Calu3 (cell line): ENCODE measurements at regions of chr12 and their contacts with region 1.

Region 1: GRCh38 chr12:6613776-6614512 is 6.8 kb upstream of the CHD4 start:
- DNase-seq: peak; percentile 55
- H3K4me3 Mint-ChIP-seq: peak overlapping the region; percentile 16
- H3K27ac Mint-ChIP-seq: peak overlapping the region; percentile 40
- H3K4me1 Mint-ChIP-seq: peaks cover 25% of the 10 kb centered on the region
- H3K27me3 Mint-ChIP-seq: no peaks in the 10 kb centered on the region
- CTCF ChIP-seq: no peak

Region 2: GRCh38 chr12:6697584-6698351 is 83.8 kb after region 1 on chr12:
- CTCF ChIA-PET with region 1: interaction called, 3 read pairs
- intact Hi-C with region 1: loop called (anchors 5 kb)
- DNase-seq: peak; percentile 55
- H3K4me3 Mint-ChIP-seq: no peak overlapping the region
- H3K27ac Mint-ChIP-seq: no peak overlapping the region
- H3K4me1 Mint-ChIP-seq: no peaks in the 10 kb centered on the region
- H3K27me3 Mint-ChIP-seq: peaks cover 100% of the 10 kb centered on the region
- CTCF ChIP-seq: peak; percentile 74